ENCODE measurements at regions of chr3 and their contacts with region 1.

Region 1: DNA sequence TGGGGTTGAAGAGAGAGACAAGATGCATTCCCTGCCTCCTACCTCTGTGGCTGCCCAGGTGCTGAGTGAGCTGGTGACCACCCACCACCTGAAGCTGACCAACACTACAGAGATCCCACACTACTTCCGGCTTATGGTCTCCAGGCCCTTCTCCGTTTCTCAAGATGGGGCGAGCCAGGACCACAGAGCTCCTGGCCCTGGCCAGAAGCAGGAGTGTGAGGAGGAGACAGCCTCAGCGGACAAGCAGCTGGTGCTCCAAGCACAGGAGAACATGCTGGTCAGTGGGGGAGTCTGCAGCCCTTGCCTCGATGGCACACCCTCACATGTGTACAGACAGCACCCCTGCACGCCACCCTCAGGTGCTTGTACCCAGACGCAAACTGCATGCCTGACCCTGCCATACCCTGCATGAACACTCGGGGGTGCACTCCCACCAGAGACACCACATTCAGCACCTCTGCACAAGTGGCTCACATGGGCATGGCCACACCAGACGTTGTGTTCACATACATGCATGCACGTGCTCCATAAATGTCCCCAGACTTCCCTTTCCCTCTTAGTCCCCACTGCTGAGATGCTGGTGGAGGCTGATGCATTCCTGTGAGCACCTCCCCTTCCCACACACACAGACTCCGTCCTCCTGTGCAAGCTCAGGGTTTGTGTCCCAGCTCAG is 19.0 kb downstream of the ACAA1 start:
- DNase-seq: peak in 8 of 10 donors; percentile 44 to 94 (median 55)

Region 2: GRCh38 chr3:37386627-37387230 is 731.2 kb before region 1 on chr3:
- intact Hi-C with region 1: no loop called
- DNase-seq: no peak

Region 3: GRCh38 chr3:38354588-38355330 is 236.9 kb after region 1 on chr3:
- intact Hi-C with region 1: loop called (anchors 5 kb)
- DNase-seq: no peak

Measured in posterior cingulate gyrus (tissue), 11 donors.